ENCODE measurements at regions of chr3 and their contacts with region 1.

Region 1: GRCh38 chr3:194472290-194472920 is 14.4 kb downstream of the ATP13A3 start:
- DNase-seq: no peak
- ATAC-seq: peak; percentile 87
- H3K4me3 ChIP-seq: no peak overlapping the region
- H3K27ac ChIP-seq: no peak overlapping the region
- H3K4me1 ChIP-seq: no peaks in the 10 kb centered on the region; the same call in 1 of the 2 replicates
- H3K27me3 ChIP-seq: no peaks in the 10 kb centered on the region
- CTCF ChIP-seq: peak; percentile 97 to 99 (median 99); a peak in 5 of 6 replicates
- EP300 ChIP-seq: no peak
- POLR2A ChIP-seq: no peak
- RAD21 ChIP-seq: peak; percentile 100

Region 2: DNA sequence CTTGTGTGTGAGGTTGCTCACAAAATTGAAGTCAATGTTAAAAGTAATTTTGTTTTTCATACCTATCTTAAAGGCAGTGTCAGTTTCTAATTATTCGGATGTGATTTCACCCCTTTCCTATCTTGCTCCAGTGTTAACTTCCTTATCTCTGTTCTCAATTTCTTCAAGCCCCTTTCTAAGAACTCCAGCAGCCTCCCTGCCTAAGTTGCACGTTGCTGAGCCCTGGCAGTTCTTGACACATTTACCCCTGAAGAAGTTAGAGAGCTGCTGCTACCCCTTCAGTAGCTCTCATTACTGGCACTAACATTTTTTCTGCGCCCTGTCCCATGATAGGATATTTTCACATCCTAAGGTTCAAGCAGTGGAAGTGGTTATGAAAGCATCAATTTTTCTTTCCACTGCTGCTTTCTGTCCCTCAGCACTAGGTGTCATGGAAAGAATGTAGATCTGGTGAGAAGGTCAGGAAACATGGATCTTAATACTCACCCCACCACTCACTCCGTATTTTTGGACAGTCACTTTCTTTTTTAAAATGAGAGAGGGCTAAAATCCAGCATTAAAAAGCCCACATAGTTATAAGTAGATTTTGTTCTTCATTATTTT is 816.5 kb before region 1 on chr3:
- CTCF ChIA-PET with region 1: no interaction called
- POLR2A ChIA-PET with region 1: no interaction called
- RAD21 ChIA-PET with region 1: no interaction called
- SMC1A ChIA-PET with region 1: no interaction called
- in situ Hi-C with region 1: no loop called
- intact Hi-C with region 1: no loop called
- DNase-seq: no peak
- ATAC-seq: no peak
- H3K4me3 ChIP-seq: no peak overlapping the region
- H3K27ac ChIP-seq: no peak overlapping the region
- H3K4me1 ChIP-seq: no peaks in the 10 kb centered on the region
- H3K27me3 ChIP-seq: no peaks in the 10 kb centered on the region
- CTCF ChIP-seq: no peak
- EP300 ChIP-seq: no peak
- POLR2A ChIP-seq: no peak
- RAD21 ChIP-seq: no peak

Region 3: DNA sequence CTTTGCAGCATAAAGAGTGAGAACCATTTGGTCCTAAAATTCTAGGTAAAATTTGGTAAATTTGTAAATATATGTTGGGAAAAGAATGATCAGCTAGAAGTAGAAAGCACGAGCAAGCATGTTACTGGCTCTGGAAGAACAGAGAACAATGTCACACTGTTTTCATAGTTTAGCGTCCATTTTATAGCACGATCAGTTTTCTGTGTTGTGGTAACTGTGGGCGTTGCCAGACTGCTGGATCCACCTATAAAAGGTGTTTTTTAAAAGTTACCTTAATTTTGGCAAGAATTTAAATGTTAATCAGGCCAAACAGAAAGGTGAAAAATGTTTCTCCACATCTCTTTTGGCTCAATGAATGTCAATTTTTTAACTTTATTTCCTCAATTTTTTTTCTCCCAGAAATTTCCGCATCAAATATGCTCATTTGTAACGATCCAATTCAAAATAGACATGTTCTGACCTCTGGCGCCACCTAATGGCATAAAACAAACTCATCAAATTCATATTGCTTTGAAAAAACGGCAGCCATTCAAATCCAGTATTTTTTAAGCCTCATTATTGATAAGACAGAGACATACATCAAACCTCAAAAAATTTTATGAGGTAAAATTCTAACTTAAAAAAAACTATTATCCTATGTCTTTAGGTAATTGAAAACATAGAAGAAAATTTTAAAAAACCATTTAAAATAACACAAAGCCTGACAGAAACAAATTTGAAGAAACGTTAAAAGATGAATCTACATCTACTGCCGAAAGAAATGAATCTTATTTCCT is 67.9 kb before region 1 on chr3:
- CTCF ChIA-PET with region 1: interaction called, 14 read pairs
- POLR2A ChIA-PET with region 1: no interaction called
- RAD21 ChIA-PET with region 1: no interaction called
- SMC1A ChIA-PET with region 1: no interaction called
- in situ Hi-C with region 1: no loop called
- intact Hi-C with region 1: no loop called
- DNase-seq: no peak
- ATAC-seq: peak; percentile 58; the same call in 2 of the 3 replicates
- H3K4me3 ChIP-seq: no peak overlapping the region
- H3K27ac ChIP-seq: no peak overlapping the region
- H3K4me1 ChIP-seq: no peaks in the 10 kb centered on the region
- H3K27me3 ChIP-seq: no peaks in the 10 kb centered on the region
- CTCF ChIP-seq: peak; percentile 55 to 65 (median 63)
- EP300 ChIP-seq: no peak
- POLR2A ChIP-seq: no peak
- RAD21 ChIP-seq: peak; percentile 56

Region 4: GRCh38 chr3:194497821-194498598 is 25.6 kb after region 1 on chr3:
- CTCF ChIA-PET with region 1: interaction called, 7 read pairs
- POLR2A ChIA-PET with region 1: interaction called, 4 read pairs
- RAD21 ChIA-PET with region 1: interaction called, 3 read pairs
- SMC1A ChIA-PET with region 1: interaction called, 14 read pairs
- in situ Hi-C with region 1: no loop called
- intact Hi-C with region 1: no loop called
- DNase-seq: no peak
- ATAC-seq: peak; percentile 75
- H3K4me3 ChIP-seq: no peak overlapping the region
- H3K27ac ChIP-seq: no peak overlapping the region
- H3K4me1 ChIP-seq: peaks cover 13% of the 10 kb centered on the region
- H3K27me3 ChIP-seq: no peaks in the 10 kb centered on the region
- CTCF ChIP-seq: no peak
- EP300 ChIP-seq: no peak
- POLR2A ChIP-seq: no peak
- RAD21 ChIP-seq: no peak

Region 5: GRCh38 chr3:194583604-194584318 is 111.4 kb after region 1 on chr3:
- CTCF ChIA-PET with region 1: interaction called, 237 read pairs
- POLR2A ChIA-PET with region 1: interaction called, 4 read pairs
- RAD21 ChIA-PET with region 1: interaction called, 13 read pairs
- SMC1A ChIA-PET with region 1: interaction called, 15 read pairs
- in situ Hi-C with region 1: no loop called
- intact Hi-C with region 1: no loop called
- DNase-seq: peak; percentile 53
- ATAC-seq: peak; percentile 98
- H3K4me3 ChIP-seq: peak overlapping the region; percentile 77
- H3K27ac ChIP-seq: peak overlapping the region; percentile 96
- H3K4me1 ChIP-seq: no peaks in the 10 kb centered on the region
- H3K27me3 ChIP-seq: no peaks in the 10 kb centered on the region
- CTCF ChIP-seq: no peak
- EP300 ChIP-seq: 0 out of 4 replicates have a peak, but pooled peaks of 1 of the 2 experiments have one; percentile 32
- POLR2A ChIP-seq: peak; percentile 100
- RAD21 ChIP-seq: no peak

Region 6: DNA sequence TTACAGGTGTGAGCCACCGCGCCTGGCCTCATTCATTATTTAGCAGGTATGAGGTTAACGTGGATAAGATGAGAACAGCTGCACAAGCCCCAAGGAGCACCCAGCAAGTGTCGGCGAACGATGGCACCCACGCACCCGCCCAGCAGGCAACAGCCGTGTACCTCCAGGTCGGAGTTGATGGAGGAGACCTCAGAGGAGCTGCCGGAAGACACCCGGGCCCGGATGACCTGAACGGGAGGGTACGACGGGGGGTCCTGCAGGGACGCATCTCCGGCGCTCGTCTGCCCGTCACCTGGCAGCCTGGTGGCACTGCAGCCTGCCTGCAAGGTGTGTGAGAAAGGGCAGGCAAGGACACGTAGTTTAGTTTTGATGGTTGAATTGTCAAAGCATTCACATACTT is 131.7 kb after region 1 on chr3:
- CTCF ChIA-PET with region 1: no interaction called
- POLR2A ChIA-PET with region 1: no interaction called
- RAD21 ChIA-PET with region 1: no interaction called
- SMC1A ChIA-PET with region 1: no interaction called
- in situ Hi-C with region 1: no loop called
- intact Hi-C with region 1: no loop called
- DNase-seq: no peak
- ATAC-seq: no peak
- H3K4me3 ChIP-seq: no peak overlapping the region
- H3K27ac ChIP-seq: no peak overlapping the region
- H3K4me1 ChIP-seq: no peaks in the 10 kb centered on the region
- H3K27me3 ChIP-seq: no peaks in the 10 kb centered on the region; a peak in 1 of 4 replicates
- CTCF ChIP-seq: no peak
- EP300 ChIP-seq: no peak
- POLR2A ChIP-seq: no peak
- RAD21 ChIP-seq: no peak

Region 7: DNA sequence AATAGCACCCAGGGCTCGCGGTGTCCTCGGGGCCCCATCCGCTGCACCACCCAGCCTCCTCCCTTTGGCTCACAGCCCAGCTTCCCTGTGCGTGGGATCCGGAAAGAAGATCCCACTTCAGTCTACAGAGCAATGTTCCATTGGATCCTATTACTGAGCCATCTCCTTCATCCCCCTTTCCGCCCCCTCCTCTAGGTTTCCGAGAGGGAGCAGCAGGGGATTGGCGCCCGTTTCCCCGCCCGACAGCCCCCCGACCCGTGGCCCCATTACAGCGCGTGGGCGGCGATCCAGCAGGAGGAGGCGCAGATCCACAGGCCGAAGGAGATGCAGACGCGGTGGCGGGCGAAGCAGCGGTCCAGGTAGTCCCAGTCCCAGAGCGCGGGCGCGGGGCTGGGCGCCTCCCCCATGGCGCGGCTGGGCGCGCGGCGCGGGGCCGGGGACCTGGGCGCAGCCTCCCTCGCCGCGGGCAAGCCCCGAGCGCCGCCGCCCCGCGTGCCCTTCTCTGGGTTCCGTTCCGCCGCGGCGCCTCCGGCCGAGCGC is 160.5 kb after region 1 on chr3:
- CTCF ChIA-PET with region 1: interaction called, 7 read pairs
- POLR2A ChIA-PET with region 1: no interaction called
- RAD21 ChIA-PET with region 1: interaction called, 3 read pairs
- SMC1A ChIA-PET with region 1: no interaction called
- in situ Hi-C with region 1: no loop called
- intact Hi-C with region 1: loop called (anchors 1 kb)
- DNase-seq: no peak
- ATAC-seq: peak; percentile 78
- H3K4me3 ChIP-seq: peak overlapping the region; percentile 67
- H3K27ac ChIP-seq: no peak overlapping the region
- H3K4me1 ChIP-seq: no peaks in the 10 kb centered on the region; the same call in none of the 2 replicates
- H3K27me3 ChIP-seq: no peaks in the 10 kb centered on the region
- CTCF ChIP-seq: no peak
- EP300 ChIP-seq: no peak
- POLR2A ChIP-seq: no peak
- RAD21 ChIP-seq: no peak

Region 8: GRCh38 chr3:194852825-194853537 is 380.6 kb after region 1 on chr3:
- CTCF ChIA-PET with region 1: no interaction called
- POLR2A ChIA-PET with region 1: no interaction called
- RAD21 ChIA-PET with region 1: no interaction called
- SMC1A ChIA-PET with region 1: no interaction called
- in situ Hi-C with region 1: no loop called
- intact Hi-C with region 1: no loop called
- DNase-seq: no peak
- ATAC-seq: no peak
- H3K4me3 ChIP-seq: no peak overlapping the region
- H3K27ac ChIP-seq: no peak overlapping the region
- H3K4me1 ChIP-seq: no peaks in the 10 kb centered on the region
- H3K27me3 ChIP-seq: peaks cover 0 to 4% of the 10 kb centered on the region in 2 experiments; a peak in 2 of 4 replicates
- CTCF ChIP-seq: no peak
- EP300 ChIP-seq: no peak
- POLR2A ChIP-seq: no peak
- RAD21 ChIP-seq: no peak

Measured in GM12878 (cell line).